ENCODE measurements at regions of chr11 and their contacts with region 1.

Region 1: GRCh38 chr11:88301488-88302140 is 35.9 kb downstream of the CTSC start:
- DNase-seq: peak; percentile 36 to 68
- ATAC-seq: peak; percentile 70 to 87 (median 85)
- H3K4me3 ChIP-seq: no peak overlapping the region
- H3K4me3 Mint-ChIP-seq: peak overlapping the region; percentile 77
- H3K27ac ChIP-seq: peak overlapping the region; percentile 72
- H3K27ac Mint-ChIP-seq: peak overlapping the region; percentile 93 to 99
- H3K4me1 ChIP-seq: peaks cover 26% of the 10 kb centered on the region
- H3K4me1 Mint-ChIP-seq: peaks cover 86 to 89% of the 10 kb centered on the region in 2 donors
- H3K27me3 ChIP-seq: no peaks in the 10 kb centered on the region
- H3K27me3 Mint-ChIP-seq: no peaks in the 10 kb centered on the region
- CTCF ChIP-seq: no peak

Region 2: GRCh38 chr11:88277349-88277915 is 24.2 kb before region 1 on chr11:
- intact Hi-C with region 1: no loop called
- DNase-seq: no peak
- ATAC-seq: no peak
- H3K4me3 ChIP-seq: no peak overlapping the region
- H3K4me3 Mint-ChIP-seq: no peak overlapping the region
- H3K27ac ChIP-seq: no peak overlapping the region
- H3K27ac Mint-ChIP-seq: peak overlapping the region in 1 of 2 donors; percentile 10
- H3K4me1 ChIP-seq: no peaks in the 10 kb centered on the region
- H3K4me1 Mint-ChIP-seq: peaks cover 18 to 29% of the 10 kb centered on the region in 2 donors
- H3K27me3 ChIP-seq: no peaks in the 10 kb centered on the region
- H3K27me3 Mint-ChIP-seq: no peaks in the 10 kb centered on the region
- CTCF ChIP-seq: no peak

Region 3: GRCh38 chr11:88345408-88345807 is 43.8 kb after region 1 on chr11:
- intact Hi-C with region 1: loop called (anchors 2 kb)
- DNase-seq: peak in 1 of 2 donors; percentile 50
- ATAC-seq: peak; percentile 73 to 93 (median 89)
- H3K4me3 ChIP-seq: no peak overlapping the region
- H3K4me3 Mint-ChIP-seq: peak overlapping the region; percentile 76
- H3K27ac ChIP-seq: peak overlapping the region; percentile 4
- H3K27ac Mint-ChIP-seq: peak overlapping the region; percentile 78 to 85
- H3K4me1 ChIP-seq: peaks cover 4% of the 10 kb centered on the region
- H3K4me1 Mint-ChIP-seq: peaks cover 68 to 70% of the 10 kb centered on the region in 2 donors
- H3K27me3 ChIP-seq: no peaks in the 10 kb centered on the region
- H3K27me3 Mint-ChIP-seq: no peaks in the 10 kb centered on the region
- CTCF ChIP-seq: no peak

Region 4: DNA sequence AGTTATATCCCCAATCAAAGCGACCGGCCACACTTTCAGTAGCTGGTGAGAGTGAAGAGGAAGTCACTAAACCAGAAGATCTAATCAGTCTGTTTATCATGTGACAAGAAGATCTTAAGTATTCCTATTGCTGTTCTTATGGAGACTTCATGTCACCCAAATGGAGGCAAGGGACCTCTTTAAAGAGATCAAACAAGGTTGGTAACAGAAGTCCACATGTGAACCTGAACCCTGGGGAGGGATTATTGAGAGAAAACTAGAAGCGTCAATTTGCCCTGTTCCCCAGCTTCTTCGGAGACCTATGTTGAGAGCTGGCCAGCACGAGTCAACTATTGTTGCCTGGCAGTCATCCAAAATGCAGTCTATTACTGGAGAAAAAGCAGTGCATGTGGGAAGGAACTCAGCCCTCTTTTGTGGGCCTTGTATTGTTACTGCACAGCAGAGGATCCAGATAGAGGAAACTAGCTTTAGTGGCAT is 112.8 kb after region 1 on chr11:
- intact Hi-C with region 1: loop called (anchors 1 kb)
- DNase-seq: peak in 1 of 2 donors; percentile 63
- ATAC-seq: peak; percentile 46 to 61 (median 59)
- H3K4me3 ChIP-seq: no peak overlapping the region
- H3K4me3 Mint-ChIP-seq: peak overlapping the region; percentile 81
- H3K27ac ChIP-seq: peak overlapping the region; percentile 23
- H3K27ac Mint-ChIP-seq: peak overlapping the region; percentile 80 to 92
- H3K4me1 ChIP-seq: peaks cover 23% of the 10 kb centered on the region
- H3K4me1 Mint-ChIP-seq: peaks cover 61 to 71% of the 10 kb centered on the region in 2 donors
- H3K27me3 ChIP-seq: no peaks in the 10 kb centered on the region
- H3K27me3 Mint-ChIP-seq: no peaks in the 10 kb centered on the region
- CTCF ChIP-seq: no peak

Measured in natural killer cell (primary cell).